Activated naive CD4-positive, alpha-beta T cell treated with anti-CD3 and anti-CD28 coated beads for 36 hours (primary cell): ENCODE measurements at regions of chr6 and their contacts with region 1.

Region 1: GRCh38 chr6:27753668-27754407 is 158.4 kb downstream of the OR2B2 start:
- DNase-seq: peak; percentile 88
- H3K4me3 Mint-ChIP-seq: peak overlapping the region; percentile 77
- H3K27ac Mint-ChIP-seq: peak overlapping the region; percentile 82
- H3K4me1 Mint-ChIP-seq: peaks cover 28% of the 10 kb centered on the region
- H3K27me3 Mint-ChIP-seq: no peaks in the 10 kb centered on the region

Region 2: DNA sequence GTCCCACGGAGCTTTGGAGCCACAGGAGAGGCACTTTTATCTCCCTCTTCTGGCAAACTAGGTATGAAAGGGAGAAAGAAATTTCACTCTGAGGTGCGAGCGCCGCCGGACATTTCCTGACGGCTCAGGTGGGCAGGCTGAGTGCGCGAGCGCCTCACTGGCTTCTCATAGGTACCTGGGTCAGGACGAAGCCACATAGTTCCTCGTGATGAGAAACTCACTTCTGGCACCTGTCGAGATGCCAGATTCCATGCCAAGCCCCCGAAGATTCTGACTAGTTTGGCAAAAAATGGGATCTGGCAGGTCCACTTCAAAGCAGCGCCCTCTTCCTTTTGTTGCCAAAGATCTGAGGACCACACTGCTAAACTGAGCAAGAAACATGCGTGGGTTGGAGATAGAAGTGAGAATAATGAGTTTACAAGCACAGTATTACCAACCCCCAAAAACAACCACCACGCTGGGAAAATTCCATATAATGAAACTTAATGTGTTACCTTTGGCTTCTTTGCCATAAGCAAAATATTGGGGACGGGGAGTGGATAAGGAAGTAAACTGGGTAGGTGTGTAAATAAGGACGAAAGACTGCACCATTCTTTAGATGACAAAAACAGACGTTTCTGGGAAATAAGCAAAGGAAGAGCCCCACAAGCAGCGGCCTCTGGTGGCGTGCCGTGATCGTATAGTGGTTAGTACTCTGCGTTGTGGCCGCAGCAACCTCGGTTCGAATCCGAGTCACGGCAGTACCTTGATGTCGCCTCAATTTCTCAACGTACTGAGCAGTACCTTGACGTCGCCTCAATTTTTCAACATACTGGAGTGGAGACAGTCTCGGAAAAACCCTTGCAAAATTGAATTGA is 596.2 kb before region 1 on chr6:
- CTCF ChIA-PET with region 1: interaction called, 3 read pairs
- intact Hi-C with region 1: loop called (anchors 1 kb)
- DNase-seq: peak; percentile 94
- H3K4me3 Mint-ChIP-seq: peak overlapping the region; percentile 76
- H3K27ac Mint-ChIP-seq: peak overlapping the region; percentile 83
- H3K4me1 Mint-ChIP-seq: peaks cover 43% of the 10 kb centered on the region
- H3K27me3 Mint-ChIP-seq: no peaks in the 10 kb centered on the region

Region 3: GRCh38 chr6:27374824-27375612 is 378.8 kb before region 1 on chr6:
- CTCF ChIA-PET with region 1: no interaction called
- intact Hi-C with region 1: loop called (anchors 5 kb)
- DNase-seq: peak; percentile 89
- H3K4me3 Mint-ChIP-seq: peak overlapping the region; percentile 82
- H3K27ac Mint-ChIP-seq: peak overlapping the region; percentile 67
- H3K4me1 Mint-ChIP-seq: peaks cover 18% of the 10 kb centered on the region
- H3K27me3 Mint-ChIP-seq: no peaks in the 10 kb centered on the region

Region 4: GRCh38 chr6:27518881-27519795 is 234.7 kb before region 1 on chr6:
- CTCF ChIA-PET with region 1: interaction called, 14 read pairs
- intact Hi-C with region 1: loop called (anchors 1 kb)
- DNase-seq: peak; percentile 82
- H3K4me3 Mint-ChIP-seq: peak overlapping the region; percentile 76
- H3K27ac Mint-ChIP-seq: peak overlapping the region; percentile 81
- H3K4me1 Mint-ChIP-seq: peaks cover 18% of the 10 kb centered on the region
- H3K27me3 Mint-ChIP-seq: peaks cover 10% of the 10 kb centered on the region

Region 5: GRCh38 chr6:27720607-27721580 is 32.9 kb before region 1 on chr6:
- CTCF ChIA-PET with region 1: interaction called, 3 read pairs
- intact Hi-C with region 1: loop called (anchors 1 kb)
- DNase-seq: peak; percentile 29
- H3K4me3 Mint-ChIP-seq: no peak overlapping the region
- H3K27ac Mint-ChIP-seq: no peak overlapping the region
- H3K4me1 Mint-ChIP-seq: peaks cover 23% of the 10 kb centered on the region
- H3K27me3 Mint-ChIP-seq: peaks cover 33% of the 10 kb centered on the region

Region 6: GRCh38 chr6:27814660-27815424 is 61.0 kb after region 1 on chr6:
- CTCF ChIA-PET with region 1: no interaction called
- intact Hi-C with region 1: no loop called
- DNase-seq: peak; percentile 90
- H3K4me3 Mint-ChIP-seq: peak overlapping the region; percentile 85
- H3K27ac Mint-ChIP-seq: peak overlapping the region; percentile 99
- H3K4me1 Mint-ChIP-seq: peaks cover 29% of the 10 kb centered on the region
- H3K27me3 Mint-ChIP-seq: peaks cover 3% of the 10 kb centered on the region

Region 7: GRCh38 chr6:27893059-27893835 is 139.4 kb after region 1 on chr6:
- CTCF ChIA-PET with region 1: interaction called, 5 read pairs
- intact Hi-C with region 1: loop called (anchors 1 kb)
- DNase-seq: peak; percentile 93
- H3K4me3 Mint-ChIP-seq: no peak overlapping the region
- H3K27ac Mint-ChIP-seq: no peak overlapping the region
- H3K4me1 Mint-ChIP-seq: peaks cover 27% of the 10 kb centered on the region
- H3K27me3 Mint-ChIP-seq: peaks cover 2% of the 10 kb centered on the region